MCF 10A (cell line): ENCODE measurements at regions of chr15 and their contacts with region 1.

Region 1: DNA sequence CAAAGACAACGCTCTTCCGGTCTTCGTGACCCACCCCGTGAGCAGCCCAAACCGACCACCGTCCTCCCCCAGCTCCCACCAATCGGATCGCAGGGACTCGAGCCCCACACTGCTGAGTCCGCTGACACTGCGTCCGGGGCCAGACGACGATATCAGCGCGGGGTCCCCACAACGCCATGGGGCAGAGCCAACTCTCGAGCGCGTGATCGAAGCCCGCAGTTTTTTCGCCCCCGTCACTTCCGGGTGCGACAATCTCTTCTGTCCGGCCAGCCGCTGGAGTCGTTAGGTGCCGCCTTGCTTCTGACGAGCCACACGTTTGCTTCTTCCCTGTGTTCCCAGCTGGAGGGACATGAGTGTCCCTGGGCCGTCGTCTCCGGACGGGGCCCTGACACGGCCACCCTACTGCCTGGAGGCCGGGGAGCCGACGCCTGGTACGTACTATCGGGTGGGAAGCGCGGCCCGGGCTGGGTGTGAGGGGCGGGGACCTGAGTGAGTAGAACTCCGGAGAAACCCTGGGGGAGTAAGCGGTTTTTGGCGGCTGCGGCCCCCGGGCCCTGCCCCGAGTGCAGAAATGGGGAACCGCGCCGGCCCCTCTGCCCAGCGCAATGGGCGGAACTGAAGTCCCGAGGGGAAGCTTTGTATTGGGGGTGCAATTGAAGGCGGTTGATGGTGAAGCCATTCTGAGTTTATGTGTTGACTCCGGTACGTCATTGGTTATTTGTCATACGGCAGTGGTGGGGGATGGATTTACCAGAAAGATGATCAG is at the start of gene BLOC1S6:
- DNase-seq: peak; percentile 88
- H3K4me3 Mint-ChIP-seq: peak within 1 kb of the TSS; percentile 73
- H3K27ac Mint-ChIP-seq: peak within 1 kb of the TSS; percentile 100
- H3K4me1 Mint-ChIP-seq: peaks cover 16% of the 10 kb centered on the region
- H3K27me3 Mint-ChIP-seq: peaks cover 4% of the 10 kb centered on the region
- CTCF ChIP-seq: no peak
- total RNA-seq, gene BLOC1S6: 54.6 and 68.5 TPM in 2 replicates

Region 2: DNA sequence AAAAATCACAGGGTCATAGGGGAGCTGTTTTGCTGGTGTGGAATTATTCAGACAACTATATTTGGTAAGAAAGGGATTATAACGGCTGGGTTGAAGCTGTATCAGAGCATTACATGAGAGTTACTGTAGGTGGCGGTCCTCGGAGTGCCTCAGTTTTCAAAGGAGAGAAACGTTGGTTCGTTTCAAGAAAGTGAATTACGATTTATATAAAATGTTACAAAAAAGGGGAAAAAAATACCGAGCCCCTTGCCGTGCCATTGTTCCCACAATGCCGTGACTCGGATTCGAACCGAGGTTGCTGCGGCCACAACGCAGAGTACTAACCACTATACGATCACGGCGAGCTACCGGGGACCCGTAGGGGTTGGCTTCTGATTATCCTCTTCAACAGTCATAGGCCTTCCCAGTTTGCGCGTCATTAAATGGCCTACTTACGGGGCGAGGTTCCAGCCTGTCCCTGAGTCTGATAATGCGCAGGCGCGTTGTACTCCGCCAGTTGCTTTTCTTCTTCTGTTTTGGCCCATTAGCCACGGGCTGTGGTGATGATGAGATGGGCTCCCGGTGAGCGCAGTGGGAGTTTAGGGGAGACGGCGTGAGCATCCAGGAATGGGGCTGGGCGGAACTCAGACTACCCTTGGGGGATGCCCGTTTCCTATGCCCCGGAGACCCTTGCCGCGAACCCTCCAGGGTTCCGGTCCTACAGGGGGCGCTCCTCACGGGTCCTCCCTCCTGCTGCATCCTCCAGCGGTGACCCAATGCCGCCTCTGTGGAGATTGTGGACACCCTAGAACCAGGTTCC is 388.7 kb before region 1 on chr15:
- CTCF ChIA-PET with region 1: no interaction called
- POLR2A ChIA-PET with region 1: interaction called, 3 read pairs
- intact Hi-C with region 1: loop called (anchors 1 kb)
- DNase-seq: peak; percentile 98
- H3K4me3 Mint-ChIP-seq: no peak overlapping the region
- H3K27ac Mint-ChIP-seq: no peak overlapping the region
- H3K4me1 Mint-ChIP-seq: peaks cover 8% of the 10 kb centered on the region
- H3K27me3 Mint-ChIP-seq: no peaks in the 10 kb centered on the region
- CTCF ChIP-seq: peak; percentile 79

Region 3: GRCh38 chr15:45429974-45430792 is 157.1 kb before region 1 on chr15:
- CTCF ChIA-PET with region 1: interaction called, 10 read pairs
- POLR2A ChIA-PET with region 1: interaction called, 4 read pairs
- intact Hi-C with region 1: no loop called
- DNase-seq: peak; percentile 52
- H3K4me3 Mint-ChIP-seq: no peak overlapping the region
- H3K27ac Mint-ChIP-seq: no peak overlapping the region
- H3K4me1 Mint-ChIP-seq: peaks cover 6% of the 10 kb centered on the region
- H3K27me3 Mint-ChIP-seq: no peaks in the 10 kb centered on the region
- CTCF ChIP-seq: peak; percentile 100

Region 4: DNA sequence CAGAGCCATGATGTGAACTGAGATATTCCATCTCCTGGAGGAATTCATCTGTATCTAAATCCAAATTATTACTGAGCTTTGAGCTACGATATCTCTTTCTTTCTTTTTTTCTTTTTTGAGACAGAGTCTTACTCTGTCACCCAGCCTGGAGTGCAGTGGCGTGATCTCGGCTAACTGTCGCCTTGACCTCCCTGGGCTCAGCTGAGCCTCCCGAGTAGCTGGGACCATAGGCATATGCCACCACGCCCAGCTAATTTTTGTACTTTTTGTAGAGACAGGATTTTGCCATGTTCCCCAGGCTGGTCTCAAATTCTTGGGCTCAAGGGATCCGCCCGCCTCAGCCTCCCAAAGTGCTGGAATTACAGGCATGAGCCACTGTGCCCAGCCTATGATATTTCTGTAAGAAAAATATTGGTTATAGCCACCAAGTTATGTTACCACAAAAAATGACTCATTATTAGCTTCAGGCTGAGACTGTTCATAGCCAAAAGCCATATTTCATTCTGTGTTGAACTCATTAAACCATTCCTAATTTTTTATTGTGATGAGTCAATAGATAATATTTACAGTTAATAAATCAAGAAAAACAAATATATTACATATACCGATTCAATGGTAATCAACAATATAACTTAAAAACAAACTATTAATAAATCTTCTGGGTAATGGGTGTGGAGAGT is 37.6 kb before region 1 on chr15:
- CTCF ChIA-PET with region 1: no interaction called
- POLR2A ChIA-PET with region 1: interaction called, 17 read pairs
- intact Hi-C with region 1: no loop called
- DNase-seq: peak; percentile 21
- H3K4me3 Mint-ChIP-seq: no peak overlapping the region
- H3K27ac Mint-ChIP-seq: peak overlapping the region; percentile 76
- H3K4me1 Mint-ChIP-seq: peaks cover 14% of the 10 kb centered on the region
- H3K27me3 Mint-ChIP-seq: no peaks in the 10 kb centered on the region
- CTCF ChIP-seq: no peak

Region 5: GRCh38 chr15:45611305-45611704 is 24.0 kb after region 1 on chr15:
- CTCF ChIA-PET with region 1: interaction called, 11 read pairs
- POLR2A ChIA-PET with region 1: interaction called, 5 read pairs
- intact Hi-C with region 1: no loop called
- DNase-seq: peak; percentile 37
- H3K4me3 Mint-ChIP-seq: no peak overlapping the region
- H3K27ac Mint-ChIP-seq: no peak overlapping the region
- H3K4me1 Mint-ChIP-seq: peaks cover 6% of the 10 kb centered on the region
- H3K27me3 Mint-ChIP-seq: no peaks in the 10 kb centered on the region
- CTCF ChIP-seq: peak; percentile 43

Region 6: DNA sequence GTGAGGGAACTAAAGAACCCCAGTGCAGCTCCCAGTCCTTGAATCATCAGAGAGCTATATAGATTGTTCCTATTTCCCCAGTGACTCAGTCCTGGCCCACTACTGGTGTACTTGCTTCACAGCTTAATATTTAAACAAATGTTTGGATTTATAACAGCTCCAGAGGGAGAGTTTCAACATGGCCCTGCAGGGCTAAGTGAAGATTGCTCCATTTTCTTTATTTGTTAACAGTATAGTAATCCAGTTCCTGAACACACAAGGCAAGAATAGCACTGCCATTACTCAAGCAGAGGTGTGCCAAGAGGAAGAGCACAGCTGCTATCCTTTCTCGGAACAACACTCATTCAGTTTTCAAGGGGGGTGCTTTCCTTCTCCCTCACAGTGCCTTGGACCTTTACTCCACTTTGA is 54.1 kb after region 1 on chr15:
- CTCF ChIA-PET with region 1: interaction called, 4 read pairs
- POLR2A ChIA-PET with region 1: interaction called, 51 read pairs
- intact Hi-C with region 1: no loop called
- DNase-seq: peak; percentile 97
- H3K4me3 Mint-ChIP-seq: peak overlapping the region; percentile 52
- H3K27ac Mint-ChIP-seq: peak overlapping the region; percentile 91
- H3K4me1 Mint-ChIP-seq: peaks cover 65% of the 10 kb centered on the region
- H3K27me3 Mint-ChIP-seq: no peaks in the 10 kb centered on the region
- CTCF ChIP-seq: peak; percentile 7